ENCODE measurements at regions of chr2 and their contacts with region 1.

Region 1: DNA sequence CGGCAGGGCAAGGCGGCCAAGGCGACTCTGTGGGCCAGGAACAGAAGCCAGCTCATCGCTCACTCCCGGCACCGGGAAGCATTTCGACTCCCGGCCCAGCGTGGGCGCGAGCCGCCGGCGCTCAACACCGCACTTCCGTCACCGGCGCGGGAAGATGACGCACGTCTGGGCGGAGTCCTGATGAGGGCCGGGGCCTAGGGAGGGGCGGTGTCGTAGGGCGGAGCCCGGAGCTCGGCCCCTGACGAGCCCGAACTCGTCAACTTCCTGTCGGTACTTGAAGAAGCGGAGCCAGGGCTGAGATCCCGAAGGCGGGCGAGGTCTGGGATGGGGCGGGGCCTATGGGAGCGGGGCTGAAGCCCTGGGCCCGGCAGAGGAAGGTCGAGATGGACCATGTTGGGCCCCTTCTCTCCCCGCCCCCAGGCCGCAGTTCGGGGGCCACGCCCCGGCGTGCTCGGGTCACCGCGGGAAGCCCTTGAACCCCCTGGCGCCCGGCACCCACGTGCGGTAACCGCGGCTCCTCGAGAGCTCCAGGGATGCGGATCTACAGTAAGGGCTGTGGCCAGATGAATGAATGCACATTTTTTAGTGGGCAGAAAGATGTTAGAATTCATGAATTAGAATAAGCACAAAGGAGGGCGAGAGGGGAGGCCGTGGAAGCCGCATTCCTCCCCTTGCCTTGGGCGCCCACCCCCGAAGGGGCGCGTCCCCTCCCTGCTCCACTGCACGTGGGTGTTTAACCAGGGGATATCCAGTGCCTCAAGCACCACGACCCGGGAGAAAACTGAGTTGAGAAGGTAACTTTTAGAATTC is at the start of gene RNASEH1:
- DNase-seq: peak; percentile 99
- H3K4me3 ChIP-seq: peak within 1 kb of the TSS; percentile 65 to 96 (median 90)
- H3K27ac ChIP-seq: peak within 1 kb of the TSS; percentile 80
- H3K4me1 ChIP-seq: peaks cover 15% of the 10 kb centered on the region
- H3K27me3 ChIP-seq: no peaks in the 10 kb centered on the region
- CTCF ChIP-seq: no peak
- POLR2A ChIP-seq: peak; percentile 90
- total RNA-seq, gene RNASEH1: 30.8 and 31.4 TPM in 2 replicates

Region 2: DNA sequence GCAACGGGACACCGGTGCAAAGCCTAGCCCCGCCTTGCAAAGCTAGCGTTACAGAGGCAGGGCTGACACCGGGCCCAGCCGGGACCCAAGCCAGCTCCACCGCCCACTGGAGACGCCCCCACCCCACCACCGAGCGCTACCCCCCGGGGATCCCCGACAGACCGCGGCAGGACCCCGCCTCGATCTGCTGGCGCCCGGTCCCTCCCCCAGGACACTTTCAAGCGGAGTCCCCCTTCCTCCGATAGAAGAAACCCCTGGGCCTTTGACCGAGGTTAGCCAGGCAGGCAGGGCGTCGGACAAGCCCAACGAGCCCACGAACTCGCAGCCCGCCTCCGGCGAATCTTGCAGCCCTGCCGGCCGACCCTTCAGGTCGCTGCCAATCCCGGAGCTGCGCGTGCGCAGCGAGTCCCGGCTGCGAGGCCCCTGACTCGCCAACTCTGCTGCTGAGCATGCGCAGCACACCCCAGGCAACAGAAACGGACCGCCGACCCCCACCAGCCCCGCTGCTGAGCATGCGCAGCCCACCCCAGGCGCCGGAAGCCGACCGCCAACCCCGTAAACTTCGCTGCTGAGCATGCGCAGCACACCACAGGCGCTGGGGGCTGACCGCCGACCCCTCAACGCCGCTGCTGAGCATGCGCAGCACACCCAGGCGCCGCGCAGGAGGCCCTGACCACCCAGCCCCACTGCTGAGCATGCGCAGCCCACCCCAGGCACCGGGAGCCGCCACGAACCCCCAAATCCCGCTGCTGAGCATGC is 39.7 kb before region 1 on chr2:
- CTCF ChIA-PET with region 1: interaction called, 5 read pairs
- POLR2A ChIA-PET with region 1: no interaction called
- dilution Hi-C with region 1: no loop called
- intact Hi-C with region 1: loop called (anchors 1 kb)
- DNase-seq: peak; percentile 100
- H3K4me3 ChIP-seq: peak overlapping the region; percentile 66 to 89 (median 89)
- H3K27ac ChIP-seq: peak overlapping the region; percentile 60
- H3K4me1 ChIP-seq: peaks cover 24% of the 10 kb centered on the region
- H3K27me3 ChIP-seq: no peaks in the 10 kb centered on the region
- CTCF ChIP-seq: no peak
- POLR2A ChIP-seq: peak; percentile 83

Region 3: GRCh38 chr2:3543023-3543683 is 15.3 kb before region 1 on chr2:
- CTCF ChIA-PET with region 1: no interaction called
- POLR2A ChIA-PET with region 1: no interaction called
- dilution Hi-C with region 1: no loop called
- intact Hi-C with region 1: no loop called
- DNase-seq: no peak
- H3K4me3 ChIP-seq: no peak overlapping the region
- H3K27ac ChIP-seq: no peak overlapping the region
- H3K4me1 ChIP-seq: no peaks in the 10 kb centered on the region
- H3K27me3 ChIP-seq: no peaks in the 10 kb centered on the region
- CTCF ChIP-seq: no peak
- POLR2A ChIP-seq: no peak

Measured in endothelial cell of umbilical vein (primary cell).